ENCODE measurements at regions of chr5 and their contacts with region 1.

Region 1: DNA sequence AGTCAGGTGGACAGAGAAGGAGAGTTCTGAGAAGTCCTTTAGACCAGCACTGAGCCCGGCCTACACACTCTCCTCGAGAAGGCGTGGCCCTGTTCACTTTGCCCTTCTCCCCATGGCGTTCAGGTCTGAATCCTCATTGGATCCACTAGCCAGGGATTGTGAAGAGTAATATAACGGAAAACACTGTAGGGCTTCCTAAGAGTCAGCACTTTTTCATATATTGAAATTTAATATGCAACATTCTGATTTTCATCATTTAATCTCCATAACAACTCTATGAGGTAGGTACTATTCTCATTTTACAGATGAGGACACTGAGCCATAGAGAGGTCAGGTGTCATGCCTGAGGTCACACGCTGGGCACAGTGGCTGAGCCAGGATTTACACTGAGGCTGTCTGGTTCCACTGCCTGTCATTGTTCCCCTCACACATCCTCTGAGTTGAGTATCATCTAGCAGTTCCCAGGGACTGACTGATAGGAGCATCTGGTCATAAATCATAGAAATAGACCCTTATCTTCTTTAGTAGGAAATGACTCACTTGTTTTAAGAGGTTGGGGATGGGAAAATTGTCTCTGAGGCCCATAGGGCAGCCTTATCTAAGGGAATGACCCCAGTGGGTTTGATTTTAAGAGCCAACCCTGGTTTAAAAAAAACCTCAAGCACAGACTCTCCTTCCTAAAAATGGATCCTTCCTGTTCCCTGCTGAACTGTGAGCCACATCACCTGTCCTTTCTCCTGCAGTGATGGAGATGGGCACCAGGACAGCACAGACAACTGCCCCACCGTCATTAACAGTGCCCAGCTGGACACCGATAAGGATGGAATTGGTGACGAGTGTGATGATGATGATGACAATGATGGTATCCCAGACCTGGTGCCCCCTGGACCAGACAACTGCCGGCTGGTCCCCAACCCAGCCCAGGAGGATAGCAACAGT is 41.2 kb downstream of the THBS4 start:
- DNase-seq: no peak
- H3K4me3 ChIP-seq: no peak overlapping the region
- H3K27ac ChIP-seq: no peak overlapping the region
- H3K4me1 ChIP-seq: no peaks in the 10 kb centered on the region
- H3K27me3 ChIP-seq: no peaks in the 10 kb centered on the region
- CTCF ChIP-seq: no peak
- POLR2A ChIP-seq: no peak

Region 2: GRCh38 chr5:79560771-79561524 is 515.4 kb before region 1 on chr5:
- intact Hi-C with region 1: loop called (anchors 5 kb)
- DNase-seq: no peak
- H3K4me3 ChIP-seq: no peak overlapping the region
- H3K27ac ChIP-seq: no peak overlapping the region
- H3K4me1 ChIP-seq: no peaks in the 10 kb centered on the region
- H3K27me3 ChIP-seq: no peaks in the 10 kb centered on the region
- CTCF ChIP-seq: no peak
- POLR2A ChIP-seq: no peak

Region 3: DNA sequence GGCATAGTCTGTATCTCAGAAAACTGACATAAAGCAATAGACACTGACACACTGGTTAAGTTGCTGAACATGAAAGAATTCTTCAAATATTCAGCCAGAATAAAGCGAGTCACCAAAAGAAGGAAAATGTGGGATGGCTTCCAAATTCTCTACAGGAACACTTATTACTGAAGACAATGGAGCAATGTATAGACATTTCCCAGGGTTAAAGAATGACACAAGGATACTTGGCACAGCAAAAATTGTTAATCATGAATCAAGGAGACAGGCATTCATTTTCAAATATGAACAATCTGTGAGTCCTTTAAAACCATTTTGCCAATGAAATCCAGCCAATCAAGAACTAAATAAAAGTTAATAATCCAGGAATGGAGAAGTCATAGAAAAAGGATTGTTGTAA is 177.8 kb before region 1 on chr5:
- intact Hi-C with region 1: no loop called
- DNase-seq: no peak
- H3K4me3 ChIP-seq: no peak overlapping the region
- H3K27ac ChIP-seq: no peak overlapping the region
- H3K4me1 ChIP-seq: no peaks in the 10 kb centered on the region
- H3K27me3 ChIP-seq: no peaks in the 10 kb centered on the region
- CTCF ChIP-seq: no peak
- POLR2A ChIP-seq: no peak

Region 4: GRCh38 chr5:80165452-80165851 is 89.1 kb after region 1 on chr5:
- intact Hi-C with region 1: no loop called
- DNase-seq: no peak
- H3K4me3 ChIP-seq: no peak overlapping the region
- H3K27ac ChIP-seq: peak overlapping the region; percentile 50 to 74
- H3K4me1 ChIP-seq: peaks cover 5% of the 10 kb centered on the region
- H3K27me3 ChIP-seq: no peaks in the 10 kb centered on the region
- CTCF ChIP-seq: no peak
- POLR2A ChIP-seq: no peak